ENCODE measurements at regions of chr1 and their contacts with region 1.

Region 1: DNA sequence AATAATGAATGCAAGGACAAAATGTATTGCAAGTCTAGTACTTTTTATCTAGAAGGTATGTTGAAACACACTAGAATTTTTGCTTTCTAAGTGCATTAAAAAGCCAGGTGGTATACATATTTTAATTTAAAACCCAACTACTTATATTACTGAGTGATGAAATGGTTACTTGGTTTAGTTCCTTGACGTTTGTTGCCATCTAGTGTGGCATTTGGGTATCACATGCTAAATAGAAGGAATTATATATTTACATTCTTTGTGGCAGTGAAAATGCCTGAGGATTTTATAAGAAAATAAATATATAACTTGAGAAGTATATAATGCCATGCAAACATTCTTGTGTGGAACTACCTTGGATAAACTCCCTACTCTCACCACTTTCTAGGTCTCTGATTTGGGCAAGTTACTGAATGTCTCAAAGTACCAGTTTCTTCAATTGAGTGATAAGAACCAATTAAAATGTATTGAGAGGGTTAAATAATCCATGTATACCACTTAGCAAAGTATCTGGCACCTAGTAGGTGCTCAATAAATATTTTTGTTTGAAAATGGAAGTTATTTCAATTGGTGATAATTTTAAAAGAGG is 69.6 kb downstream of the SDCCAG8 start:
- DNase-seq: peak; percentile 48 to 67 (median 55)
- H3K4me3 ChIP-seq: no peak overlapping the region
- H3K4me3 Mint-ChIP-seq: no peak overlapping the region
- H3K27ac ChIP-seq: no peak overlapping the region
- H3K27ac Mint-ChIP-seq: no peak overlapping the region
- H3K4me1 ChIP-seq: no peaks in the 10 kb centered on the region
- H3K4me1 Mint-ChIP-seq: peaks cover 7% of the 10 kb centered on the region
- H3K27me3 ChIP-seq: no peaks in the 10 kb centered on the region
- H3K27me3 Mint-ChIP-seq: no peaks in the 10 kb centered on the region
- CTCF ChIP-seq: peak; percentile 93

Region 2: DNA sequence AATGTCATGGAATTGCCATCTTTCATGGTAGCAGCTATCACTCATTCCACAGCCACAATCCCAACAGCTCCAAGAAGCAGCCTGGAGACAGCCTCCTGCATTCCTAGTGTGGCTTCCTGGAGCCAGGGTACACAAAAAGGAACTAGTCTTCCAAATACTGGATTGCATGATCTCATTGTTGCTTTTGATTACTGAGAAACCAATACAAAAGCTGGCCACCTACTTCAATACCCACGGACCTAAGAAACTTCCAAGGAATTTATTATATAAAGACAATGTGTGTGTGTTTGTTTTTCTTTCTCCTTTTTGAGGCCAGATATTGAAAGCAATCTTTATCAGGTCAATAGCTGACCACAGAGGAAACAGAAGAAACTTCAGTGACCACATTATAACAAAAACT is 95.9 kb before region 1 on chr1:
- intact Hi-C with region 1: loop called in 1 of 2 experiments (anchors 10 kb)
- DNase-seq: no peak
- H3K4me3 ChIP-seq: no peak overlapping the region
- H3K4me3 Mint-ChIP-seq: no peak overlapping the region
- H3K27ac ChIP-seq: no peak overlapping the region
- H3K27ac Mint-ChIP-seq: no peak overlapping the region
- H3K4me1 ChIP-seq: no peaks in the 10 kb centered on the region
- H3K4me1 Mint-ChIP-seq: peaks cover 5% of the 10 kb centered on the region
- H3K27me3 ChIP-seq: no peaks in the 10 kb centered on the region
- H3K27me3 Mint-ChIP-seq: no peaks in the 10 kb centered on the region
- CTCF ChIP-seq: no peak

Region 3: GRCh38 chr1:243255791-243256512 is 69.4 kb before region 1 on chr1 and contains the start of gene SDCCAG8:
- intact Hi-C with region 1: loop called in 1 of 2 experiments (anchors 5 kb)
- DNase-seq: peak; percentile 97 to 99 (median 97)
- H3K4me3 ChIP-seq: peak within 1 kb of the TSS; percentile 61 to 96 (median 74)
- H3K4me3 Mint-ChIP-seq: peak within 1 kb of the TSS; percentile 97 to 99
- H3K27ac ChIP-seq: peak within 1 kb of the TSS; percentile 95 to 99
- H3K27ac Mint-ChIP-seq: peak within 1 kb of the TSS; percentile 99 to 100 (median 99)
- H3K4me1 ChIP-seq: peaks cover 31 to 56% of the 10 kb centered on the region in 2 donors
- H3K4me1 Mint-ChIP-seq: peaks cover 44% of the 10 kb centered on the region
- H3K27me3 ChIP-seq: no peaks in the 10 kb centered on the region
- H3K27me3 Mint-ChIP-seq: no peaks in the 10 kb centered on the region
- CTCF ChIP-seq: no peak
- polyA plus RNA-seq, gene SDCCAG8: 33.2 to 34.4 (median 33.4) TPM

Measured in CD14-positive monocyte (primary cell).